ENCODE measurements at regions of chr3 and their contacts with region 1.

Region 1: DNA sequence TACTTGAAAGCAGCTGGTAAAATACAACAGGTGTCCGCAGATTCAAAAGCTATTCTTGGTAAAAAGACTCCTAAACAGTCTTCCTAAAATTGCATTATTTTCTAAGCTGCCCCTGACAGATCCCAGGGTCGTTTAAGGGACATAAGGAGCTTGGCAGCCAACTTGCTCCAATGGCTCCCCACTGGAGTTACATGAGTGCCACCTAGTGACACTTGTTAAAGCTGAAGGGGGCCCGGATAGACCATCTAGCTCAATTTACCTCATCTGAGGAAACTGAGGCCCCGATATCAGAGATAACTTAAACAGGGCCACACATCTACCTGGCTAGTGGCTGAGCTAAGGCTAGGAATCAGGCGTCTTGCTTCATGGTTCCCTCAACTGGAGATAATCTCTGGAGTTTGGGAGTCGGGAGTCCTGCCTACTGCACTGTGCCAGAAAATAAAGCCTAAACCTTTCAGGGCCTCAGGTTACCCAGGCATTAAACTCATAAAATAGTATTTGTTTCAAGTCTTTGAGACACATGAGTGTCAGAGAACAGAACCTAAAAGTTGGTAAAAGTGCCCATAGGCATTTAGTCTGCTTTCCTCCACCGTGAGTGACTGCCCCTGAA is 6.5 kb upstream of the TBC1D23 start:
- DNase-seq: peak; percentile 47
- ATAC-seq: peak; percentile 82 to 95
- H3K4me3 ChIP-seq: no peak overlapping the region
- H3K27ac ChIP-seq: no peak overlapping the region
- H3K4me1 ChIP-seq: no peaks in the 10 kb centered on the region
- H3K27me3 ChIP-seq: no peaks in the 10 kb centered on the region
- CTCF ChIP-seq: peak; percentile 74

Region 2: DNA sequence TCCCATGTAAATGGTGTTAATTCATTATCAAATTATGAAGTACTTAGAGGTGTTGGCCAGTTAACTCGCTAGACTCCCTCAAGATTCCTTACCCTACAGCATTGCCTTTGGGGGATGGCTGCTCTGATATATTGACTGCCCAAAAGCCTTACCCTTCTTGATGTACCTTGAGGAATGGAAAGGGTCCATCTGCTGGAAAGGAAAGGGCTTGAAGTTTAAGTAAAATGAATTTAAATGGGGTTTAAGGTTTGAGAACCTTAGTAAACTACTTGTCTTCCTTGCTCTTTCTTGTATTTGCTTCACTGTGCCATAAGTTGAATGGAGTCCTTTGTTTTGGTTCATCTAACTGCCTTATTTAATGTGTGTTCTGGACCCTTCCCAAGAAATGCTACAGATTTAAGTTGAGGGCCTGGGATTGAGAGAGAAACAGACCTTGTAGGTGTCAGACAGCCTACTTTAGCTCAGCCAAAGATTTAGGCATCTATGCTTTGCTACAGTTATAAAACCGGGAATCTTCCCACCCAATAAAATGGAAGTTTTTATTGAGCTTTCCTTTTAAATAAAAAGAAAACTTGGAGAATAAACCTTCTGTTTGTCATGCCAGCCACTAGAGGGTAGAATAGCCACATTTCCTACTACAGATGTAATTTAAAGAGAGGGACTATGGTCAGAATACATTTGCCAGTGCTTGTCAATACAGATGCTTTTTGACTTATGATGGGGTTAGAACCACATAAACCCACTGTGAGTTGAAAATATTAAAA is 411.3 kb before region 1 on chr3:
- intact Hi-C with region 1: loop called (anchors 10 kb)
- DNase-seq: no peak
- ATAC-seq: peak; percentile 70 to 79
- H3K4me3 ChIP-seq: no peak overlapping the region
- H3K27ac ChIP-seq: peak overlapping the region; percentile 74
- H3K4me1 ChIP-seq: peaks cover 33% of the 10 kb centered on the region
- H3K27me3 ChIP-seq: no peaks in the 10 kb centered on the region
- CTCF ChIP-seq: peak; percentile 70

Region 3: GRCh38 chr3:100068826-100069225 is 185.4 kb before region 1 on chr3:
- intact Hi-C with region 1: loop called (anchors 10 kb)
- DNase-seq: peak; percentile 83
- ATAC-seq: peak; percentile 93
- H3K4me3 ChIP-seq: no peak overlapping the region
- H3K27ac ChIP-seq: no peak overlapping the region
- H3K4me1 ChIP-seq: peaks cover 35% of the 10 kb centered on the region
- H3K27me3 ChIP-seq: no peaks in the 10 kb centered on the region
- CTCF ChIP-seq: peak; percentile 80

Measured in lower lobe of right lung (tissue), 2 donors.